CD8-positive, alpha-beta T cell (primary cell): ENCODE measurements at regions of chr12 and their contacts with region 1.

Region 1: DNA sequence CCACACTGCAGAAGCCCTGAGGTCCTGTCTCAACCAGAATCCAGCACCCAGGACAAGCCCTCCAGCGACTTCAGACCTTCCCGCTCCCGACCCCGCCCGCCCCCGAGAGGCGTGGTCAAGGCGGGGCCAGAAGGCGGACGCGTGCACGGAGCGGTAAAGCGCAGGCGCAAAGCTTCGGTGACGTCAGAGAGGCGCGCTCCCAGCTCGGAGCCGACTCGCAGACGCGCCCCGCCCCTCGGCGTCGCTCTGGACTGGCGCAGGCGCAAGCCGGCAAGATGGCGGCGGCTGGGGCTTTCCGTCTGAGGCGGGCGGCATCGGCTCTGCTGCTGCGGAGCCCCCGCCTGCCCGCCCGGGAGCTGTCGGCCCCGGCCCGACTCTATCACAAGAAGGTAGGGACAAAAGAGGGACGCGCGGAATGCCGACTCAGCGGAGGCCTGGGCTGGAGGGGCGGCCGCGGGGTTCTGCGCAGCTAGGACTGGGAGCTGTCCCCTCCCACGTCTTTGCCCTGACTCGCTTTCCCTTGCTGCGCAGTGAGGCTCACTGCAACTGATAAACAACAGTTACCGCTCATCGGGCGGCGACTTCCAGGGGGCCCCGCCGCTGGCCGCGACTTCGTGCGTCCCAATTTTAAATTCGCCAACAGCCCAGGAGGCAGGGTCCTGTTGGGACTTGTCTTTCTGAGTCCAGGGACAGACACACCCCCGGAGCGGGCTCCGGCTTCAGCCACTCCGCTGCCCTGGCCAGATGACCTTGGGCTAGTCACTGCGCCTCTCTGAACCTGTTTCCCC is at the start of gene ISCU:
- DNase-seq: peak; percentile 97 to 100 (median 99)
- ATAC-seq: peak; percentile 70
- H3K4me3 ChIP-seq: peak within 1 kb of the TSS; percentile 90 to 96
- H3K4me3 Mint-ChIP-seq: peak within 1 kb of the TSS; percentile 100
- H3K27ac ChIP-seq: peak within 1 kb of the TSS; percentile 92 to 94
- H3K27ac Mint-ChIP-seq: peak within 1 kb of the TSS; percentile 100
- H3K4me1 ChIP-seq: peaks cover 44% of the 10 kb centered on the region
- H3K4me1 Mint-ChIP-seq: peaks cover 55% of the 10 kb centered on the region
- H3K27me3 ChIP-seq: no peaks in the 10 kb centered on the region
- H3K27me3 Mint-ChIP-seq: no peaks in the 10 kb centered on the region
- CTCF ChIP-seq: no peak
- total RNA-seq, gene ISCU: 254 to 260 TPM

Region 2: GRCh38 chr12:107685360-107686248 is 876.9 kb before region 1 on chr12 and contains the start of gene PWP1:
- CTCF ChIA-PET with region 1: no interaction called
- POLR2A ChIA-PET with region 1: no interaction called
- intact Hi-C with region 1: loop called in 1 of 2 experiments (anchors 1 kb)
- DNase-seq: peak; percentile 90 to 98 (median 96)
- ATAC-seq: peak; percentile 84
- H3K4me3 ChIP-seq: peak within 1 kb of the TSS; percentile 75 to 82
- H3K4me3 Mint-ChIP-seq: peak within 1 kb of the TSS; percentile 98
- H3K27ac ChIP-seq: peak within 1 kb of the TSS; percentile 74 to 90
- H3K27ac Mint-ChIP-seq: peak within 1 kb of the TSS; percentile 98
- H3K4me1 ChIP-seq: peaks cover 20% of the 10 kb centered on the region
- H3K4me1 Mint-ChIP-seq: peaks cover 34% of the 10 kb centered on the region
- H3K27me3 ChIP-seq: no peaks in the 10 kb centered on the region
- H3K27me3 Mint-ChIP-seq: no peaks in the 10 kb centered on the region
- CTCF ChIP-seq: no peak
- total RNA-seq, gene PWP1: 27.7 to 28.8 TPM

Region 3: DNA sequence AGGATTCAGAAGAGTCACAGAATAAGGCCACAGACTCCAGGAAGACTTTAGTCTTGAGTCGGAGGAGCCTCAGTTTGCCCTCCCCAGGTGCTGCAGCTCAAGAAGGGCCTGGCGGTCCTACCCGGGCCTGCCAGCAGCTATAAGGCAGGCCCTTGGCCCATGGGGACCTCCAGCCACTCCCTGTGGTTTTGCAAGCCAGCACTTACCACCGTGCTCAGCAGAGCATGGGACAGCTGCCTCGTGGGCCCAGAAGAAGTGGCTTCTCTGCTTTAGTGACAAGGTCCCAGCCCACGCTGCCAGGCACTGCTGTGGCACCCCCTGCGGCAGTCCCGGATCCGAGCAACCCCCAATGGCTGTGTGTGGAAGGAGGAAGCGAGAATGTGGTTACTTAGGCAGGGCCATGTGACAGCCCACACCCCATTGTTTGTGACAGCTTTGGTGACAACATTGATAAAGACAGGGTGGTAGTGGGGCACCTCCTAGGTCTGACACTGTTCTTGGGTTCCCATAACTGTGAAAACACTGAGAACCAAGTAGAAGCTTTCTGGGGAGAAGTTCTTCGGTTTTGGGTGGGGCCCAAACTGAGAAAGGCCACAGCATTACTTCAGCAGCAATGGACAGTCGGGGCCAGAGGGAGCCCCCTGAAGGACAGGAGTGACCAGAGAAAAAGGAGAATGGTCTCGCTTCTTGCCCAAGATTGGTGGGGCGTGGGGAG is 71.1 kb after region 1 on chr12 and contains the start of gene SELPLG:
- CTCF ChIA-PET with region 1: interaction called, 155 read pairs
- POLR2A ChIA-PET with region 1: interaction called, 80 read pairs
- intact Hi-C with region 1: loop called (anchors 1 kb)
- DNase-seq: peak; percentile 77 to 97 (median 88)
- ATAC-seq: peak; percentile 60
- H3K4me3 ChIP-seq: peak within 1 kb of the TSS; percentile 71 to 95
- H3K4me3 Mint-ChIP-seq: peak within 1 kb of the TSS; percentile 100
- H3K27ac ChIP-seq: peak within 1 kb of the TSS; percentile 91 to 92
- H3K27ac Mint-ChIP-seq: peak within 1 kb of the TSS; percentile 100
- H3K4me1 ChIP-seq: peaks cover 73% of the 10 kb centered on the region
- H3K4me1 Mint-ChIP-seq: peaks cover 71% of the 10 kb centered on the region
- H3K27me3 ChIP-seq: no peaks in the 10 kb centered on the region
- H3K27me3 Mint-ChIP-seq: no peaks in the 10 kb centered on the region
- CTCF ChIP-seq: peak; percentile 23
- total RNA-seq, gene SELPLG: 30.4 to 32.3 TPM

Region 4: DNA sequence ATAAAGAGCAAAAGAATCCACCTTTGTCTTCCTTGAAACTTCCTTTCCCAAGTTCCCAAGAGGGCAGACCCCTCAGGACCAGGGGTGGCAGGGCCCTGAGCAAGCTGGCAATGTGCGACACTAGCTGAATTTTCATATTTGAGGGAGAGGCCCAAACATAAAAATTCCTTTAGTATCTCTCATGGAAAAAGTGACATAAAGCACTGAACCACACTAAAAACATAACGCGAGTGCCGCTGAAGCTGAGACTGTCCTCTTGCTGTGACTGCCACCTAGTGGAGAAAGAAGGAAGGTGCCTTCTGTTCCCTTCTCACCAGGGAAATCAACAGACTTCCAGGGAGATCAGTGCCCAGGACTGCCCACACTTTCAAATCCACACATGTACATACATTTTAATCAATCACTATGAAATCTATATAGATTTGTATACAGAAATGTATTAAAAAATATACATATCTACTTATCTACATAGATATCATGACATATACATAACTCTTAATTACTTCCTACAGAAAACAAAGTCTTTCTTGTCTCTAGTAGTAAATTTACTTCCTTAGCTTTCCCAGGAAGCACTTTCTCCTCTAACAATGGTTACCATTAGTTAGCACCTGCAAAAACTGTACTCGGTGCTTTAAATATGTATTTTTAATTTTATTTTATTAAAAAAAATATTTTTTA is 241.0 kb after region 1 on chr12:
- CTCF ChIA-PET with region 1: interaction called, 131 read pairs
- POLR2A ChIA-PET with region 1: no interaction called
- intact Hi-C with region 1: loop called (anchors 1 kb)
- DNase-seq: peak; percentile 44 to 84 (median 68)
- ATAC-seq: peak; percentile 95
- H3K4me3 ChIP-seq: no peak overlapping the region
- H3K4me3 Mint-ChIP-seq: no peak overlapping the region
- H3K27ac ChIP-seq: no peak overlapping the region
- H3K27ac Mint-ChIP-seq: peak overlapping the region; percentile 14
- H3K4me1 ChIP-seq: no peaks in the 10 kb centered on the region
- H3K4me1 Mint-ChIP-seq: peaks cover 4% of the 10 kb centered on the region
- H3K27me3 ChIP-seq: no peaks in the 10 kb centered on the region
- H3K27me3 Mint-ChIP-seq: no peaks in the 10 kb centered on the region
- CTCF ChIP-seq: peak; percentile 94

Region 5: GRCh38 chr12:109052414-109053323 is 490.1 kb after region 1 on chr12 and contains the start of gene USP30:
- CTCF ChIA-PET with region 1: no interaction called
- POLR2A ChIA-PET with region 1: interaction called, 3 read pairs
- intact Hi-C with region 1: loop called (anchors 1 to 2 kb)
- DNase-seq: peak; percentile 73 to 93 (median 85)
- ATAC-seq: peak; percentile 74
- H3K4me3 ChIP-seq: peak within 1 kb of the TSS; percentile 85 to 90
- H3K4me3 Mint-ChIP-seq: peak within 1 kb of the TSS; percentile 89
- H3K27ac ChIP-seq: peak within 1 kb of the TSS; percentile 68 to 91
- H3K27ac Mint-ChIP-seq: peak within 1 kb of the TSS; percentile 96
- H3K4me1 ChIP-seq: peaks cover 7% of the 10 kb centered on the region
- H3K4me1 Mint-ChIP-seq: peaks cover 21% of the 10 kb centered on the region
- H3K27me3 ChIP-seq: no peaks in the 10 kb centered on the region
- H3K27me3 Mint-ChIP-seq: no peaks in the 10 kb centered on the region
- CTCF ChIP-seq: no peak
- total RNA-seq, gene USP30: 28.2 to 33.1 TPM

Region 6: DNA sequence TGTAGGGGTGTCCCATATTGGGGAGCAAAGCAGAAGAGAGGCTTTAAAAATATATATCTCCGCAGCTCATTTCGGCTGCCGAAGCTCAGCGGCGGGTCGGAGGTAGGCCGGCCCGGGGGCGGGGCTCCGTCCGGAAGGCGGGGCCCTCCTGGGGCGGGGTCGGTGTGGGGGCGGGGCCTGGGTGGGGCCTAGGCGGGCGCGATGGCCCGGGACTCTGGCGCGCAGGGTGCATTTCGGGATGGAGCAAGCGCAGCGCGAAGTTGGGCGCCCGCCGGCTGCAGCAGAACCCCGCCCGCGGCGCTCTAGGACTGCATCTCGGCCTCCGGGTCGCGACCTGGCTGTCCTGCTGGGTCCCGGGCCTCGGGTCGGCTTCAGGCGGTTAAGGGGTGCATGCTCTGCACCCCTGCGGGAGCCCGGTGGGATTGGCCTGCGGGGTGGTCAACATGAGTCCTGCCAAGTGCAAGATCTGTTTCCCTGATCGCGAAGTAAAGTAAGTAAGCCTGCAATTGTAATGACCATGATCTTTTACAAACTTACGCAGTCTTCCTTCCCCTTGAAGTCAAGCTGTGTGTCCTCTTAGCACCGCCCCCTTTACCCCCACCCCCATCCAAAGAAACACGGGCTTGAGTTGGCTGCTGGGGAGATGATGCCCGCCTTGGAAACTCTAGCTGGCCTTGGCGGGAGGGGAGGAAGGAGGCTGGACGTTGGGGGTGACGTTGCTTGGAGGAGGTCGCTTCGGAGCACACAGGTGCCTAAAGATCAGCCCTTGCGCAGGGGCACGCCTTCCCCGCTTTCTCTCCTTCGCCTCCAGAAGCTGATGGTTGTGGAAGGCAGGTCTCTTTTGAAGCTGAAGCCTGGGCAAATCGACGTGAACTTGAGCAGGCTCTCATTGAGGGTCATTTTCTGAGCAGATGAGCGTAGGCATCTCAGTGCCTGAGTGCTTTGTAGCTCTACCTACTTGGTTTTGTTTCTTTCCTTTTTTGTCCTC is 592.2 kb after region 1 on chr12:
- CTCF ChIA-PET with region 1: no interaction called
- POLR2A ChIA-PET with region 1: no interaction called
- intact Hi-C with region 1: loop called (anchors 2 to 5 kb)
- DNase-seq: peak; percentile 60 to 89 (median 78)
- ATAC-seq: peak; percentile 98
- H3K4me3 ChIP-seq: peak overlapping the region; percentile 60 to 80
- H3K4me3 Mint-ChIP-seq: peak overlapping the region; percentile 95
- H3K27ac ChIP-seq: peak overlapping the region; percentile 22 to 46
- H3K27ac Mint-ChIP-seq: peak overlapping the region; percentile 89
- H3K4me1 ChIP-seq: peaks cover 20% of the 10 kb centered on the region
- H3K4me1 Mint-ChIP-seq: peaks cover 17% of the 10 kb centered on the region
- H3K27me3 ChIP-seq: no peaks in the 10 kb centered on the region
- H3K27me3 Mint-ChIP-seq: peaks cover 3% of the 10 kb centered on the region
- CTCF ChIP-seq: no peak